ENCODE measurements at regions of chr2 and their contacts with region 1.

Region 1: DNA sequence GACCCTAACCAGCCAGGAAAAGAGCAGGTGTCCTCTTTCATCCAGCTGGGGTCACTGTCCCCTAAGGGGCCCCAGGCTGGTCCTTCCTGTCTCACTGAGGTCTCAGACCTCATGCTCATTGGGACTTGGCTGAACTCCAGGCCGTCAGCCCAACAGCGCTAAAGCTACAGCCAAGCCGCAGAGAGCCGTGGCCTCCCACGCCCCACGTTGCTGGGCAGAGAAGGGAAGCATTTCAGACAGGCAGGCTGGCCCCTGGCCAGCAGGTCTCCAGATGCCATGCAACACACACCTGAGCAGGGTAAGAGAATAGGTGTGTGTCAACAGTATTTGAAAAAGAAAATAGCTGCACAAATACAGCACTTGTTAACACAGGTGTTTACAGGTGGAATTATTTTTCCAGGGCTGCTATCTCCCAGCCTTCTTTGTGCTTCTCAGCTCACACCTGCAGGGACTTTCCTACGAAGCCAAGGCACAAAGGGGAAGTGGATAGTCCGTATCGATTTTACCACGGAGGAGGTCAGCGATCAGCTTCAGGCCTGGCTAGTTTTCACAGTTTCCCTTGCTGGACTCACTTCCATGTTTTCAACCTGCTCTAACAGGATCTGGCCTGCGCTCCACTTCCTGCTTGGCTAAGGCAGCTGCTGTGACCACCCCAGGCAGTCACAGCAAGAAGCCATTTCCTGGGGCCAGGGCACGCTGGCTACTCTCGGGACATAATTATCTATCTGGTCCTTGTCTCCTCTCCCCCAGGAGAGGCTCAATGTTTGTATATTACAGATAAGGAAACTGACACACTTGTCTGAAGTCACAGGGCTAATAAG is 156.1 kb upstream of the ID2 start:
- DNase-seq: peak; percentile 92
- ATAC-seq: peak; percentile 96
- H3K4me3 ChIP-seq: peak overlapping the region; percentile 26 to 64 (median 42)
- H3K27ac ChIP-seq: no peak overlapping the region
- H3K4me1 ChIP-seq: peaks cover 38% of the 10 kb centered on the region
- H3K27me3 ChIP-seq: peaks cover 5 to 33% of the 10 kb centered on the region in 2 experiments; a peak in 4 of 5 replicates
- CTCF ChIP-seq: peak; percentile 97
- EP300 ChIP-seq: peak; percentile 11 to 67; a peak in 2 of 4 replicates
- POLR2A ChIP-seq: no peak
- RAD21 ChIP-seq: peak; percentile 99

Region 2: GRCh38 chr2:7427293-7428060 is 1098.3 kb before region 1 on chr2:
- CTCF ChIA-PET with region 1: no interaction called
- POLR2A ChIA-PET with region 1: no interaction called
- in situ Hi-C with region 1: no loop called
- intact Hi-C with region 1: loop called (anchors 1 kb)
- DNase-seq: peak; percentile 53
- ATAC-seq: peak; percentile 56
- H3K4me3 ChIP-seq: no peak overlapping the region
- H3K27ac ChIP-seq: no peak overlapping the region
- H3K4me1 ChIP-seq: no peaks in the 10 kb centered on the region
- H3K27me3 ChIP-seq: peaks cover 0 to 14% of the 10 kb centered on the region in 2 experiments; a peak in 2 of 5 replicates
- CTCF ChIP-seq: peak; percentile 85
- EP300 ChIP-seq: no peak
- POLR2A ChIP-seq: no peak
- RAD21 ChIP-seq: peak; percentile 51; the same call in 1 of the 2 replicates

Region 3: DNA sequence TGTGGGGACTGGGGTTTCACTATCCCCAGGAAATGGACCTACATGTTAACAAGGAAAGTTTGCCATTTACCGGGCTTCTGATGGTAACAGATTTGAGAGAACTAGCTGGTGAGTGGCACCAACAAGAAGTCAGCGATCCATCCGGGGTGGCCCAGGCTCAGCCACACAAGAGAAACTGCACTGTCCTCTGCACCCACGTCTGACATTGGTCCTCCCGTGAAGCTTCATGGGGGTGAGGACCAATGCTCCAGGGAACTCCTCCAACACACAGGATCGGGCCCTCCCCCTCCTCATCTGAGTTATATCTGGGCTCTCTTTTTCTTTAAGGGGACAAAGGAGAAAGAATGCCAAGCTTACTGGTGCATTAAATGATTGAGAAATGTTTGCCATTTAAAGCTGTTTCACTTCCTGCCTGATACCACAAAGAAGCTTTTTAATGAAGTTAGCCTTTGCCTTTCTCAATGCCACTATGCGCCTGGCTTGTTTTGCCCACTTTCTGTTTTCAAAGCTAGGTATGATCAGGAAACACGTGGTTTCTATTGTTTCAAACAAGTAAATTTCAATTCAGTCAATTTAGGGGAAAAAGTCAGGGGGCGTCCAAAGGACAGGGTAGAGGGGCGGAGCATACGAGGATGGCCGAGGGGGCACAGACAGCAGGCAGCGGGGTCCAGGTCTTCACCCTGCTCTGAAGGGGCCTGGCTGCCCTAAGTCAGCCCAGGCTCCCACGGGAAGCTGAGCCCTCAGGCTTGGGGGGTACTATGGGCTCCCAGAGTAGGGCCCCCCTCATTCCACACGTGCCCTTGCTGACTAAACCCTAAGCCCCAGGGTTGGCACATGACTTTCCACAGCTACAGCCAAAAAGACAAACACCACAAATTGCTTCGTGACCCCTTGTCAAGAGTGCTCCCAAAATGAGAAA is 48.0 kb before region 1 on chr2:
- CTCF ChIA-PET with region 1: no interaction called
- POLR2A ChIA-PET with region 1: no interaction called
- in situ Hi-C with region 1: no loop called
- intact Hi-C with region 1: no loop called
- DNase-seq: no peak
- ATAC-seq: no peak
- H3K4me3 ChIP-seq: no peak overlapping the region
- H3K27ac ChIP-seq: no peak overlapping the region
- H3K4me1 ChIP-seq: peaks cover 28% of the 10 kb centered on the region
- H3K27me3 ChIP-seq: peaks cover 0 to 22% of the 10 kb centered on the region in 2 experiments; a peak in 3 of 5 replicates
- CTCF ChIP-seq: no peak
- EP300 ChIP-seq: no peak
- POLR2A ChIP-seq: no peak
- RAD21 ChIP-seq: no peak